WTC11 (cell line): ENCODE measurements at regions of chr15 and their contacts with region 1.

Region 1: DNA sequence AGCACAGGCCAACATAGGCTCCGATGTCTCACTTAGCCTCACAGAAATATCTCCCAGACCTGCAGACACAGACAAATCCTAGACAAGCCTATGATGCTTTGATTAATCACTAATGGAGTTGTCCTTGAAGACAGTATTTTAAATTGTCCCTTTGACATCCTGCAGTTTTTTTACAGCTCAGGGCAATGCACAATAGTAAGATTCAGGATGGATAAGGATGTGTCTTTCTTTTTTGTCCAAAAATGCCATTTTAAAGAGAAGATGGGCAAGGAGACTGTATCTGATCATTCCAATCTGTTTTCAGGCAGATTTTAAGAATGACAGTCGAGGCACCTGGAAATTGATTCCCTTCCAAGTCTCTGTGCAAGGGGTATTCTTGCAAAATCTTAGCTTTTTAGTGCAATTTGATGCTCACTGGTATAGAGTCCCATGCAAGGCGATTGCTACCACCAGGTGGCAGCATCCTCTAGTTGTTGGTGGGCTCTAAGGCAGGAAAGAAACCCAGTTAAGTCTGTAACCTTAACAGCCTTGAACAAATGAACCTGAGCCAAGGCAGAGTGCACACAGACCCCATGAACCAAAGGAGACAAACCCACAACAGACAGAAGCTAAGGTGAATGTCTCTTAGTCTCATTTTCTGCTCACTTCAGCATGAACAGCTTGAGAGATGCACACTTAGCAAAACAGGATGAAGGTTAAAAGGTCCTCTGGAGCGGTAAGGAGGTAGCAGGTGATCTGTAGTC is 51.2 kb upstream of the MINAR1 start:
- DNase-seq: peak; percentile 85
- ATAC-seq: peak; percentile 99
- H3K4me3 Mint-ChIP-seq: no peak overlapping the region
- H3K27ac Mint-ChIP-seq: no peak overlapping the region
- H3K4me1 Mint-ChIP-seq: no peaks in the 10 kb centered on the region; the same call in 1 of the 2 replicates
- H3K27me3 Mint-ChIP-seq: no peaks in the 10 kb centered on the region
- CTCF ChIP-seq: peak; percentile 85

Region 2: GRCh38 chr15:79358069-79358468 is 22.9 kb before region 1 on chr15:
- CTCF ChIA-PET with region 1: interaction called, 10 read pairs
- POLR2A ChIA-PET with region 1: no interaction called
- DNase-seq: no peak
- ATAC-seq: no peak
- H3K4me3 Mint-ChIP-seq: no peak overlapping the region
- H3K27ac Mint-ChIP-seq: no peak overlapping the region
- H3K4me1 Mint-ChIP-seq: no peaks in the 10 kb centered on the region
- H3K27me3 Mint-ChIP-seq: no peaks in the 10 kb centered on the region
- CTCF ChIP-seq: no peak

Region 3: GRCh38 chr15:79394231-79394630 is 13.3 kb after region 1 on chr15:
- CTCF ChIA-PET with region 1: interaction called, 17 read pairs
- POLR2A ChIA-PET with region 1: no interaction called
- DNase-seq: no peak
- ATAC-seq: no peak
- H3K4me3 Mint-ChIP-seq: no peak overlapping the region
- H3K27ac Mint-ChIP-seq: no peak overlapping the region
- H3K4me1 Mint-ChIP-seq: no peaks in the 10 kb centered on the region
- H3K27me3 Mint-ChIP-seq: no peaks in the 10 kb centered on the region
- CTCF ChIP-seq: no peak

Region 4: GRCh38 chr15:79450648-79451047 is 69.7 kb after region 1 on chr15:
- CTCF ChIA-PET with region 1: interaction called, 11 read pairs
- POLR2A ChIA-PET with region 1: no interaction called
- DNase-seq: no peak
- ATAC-seq: 0 out of 2 replicates have a peak, but pooled peaks have one; percentile 22
- H3K4me3 Mint-ChIP-seq: no peak overlapping the region
- H3K27ac Mint-ChIP-seq: no peak overlapping the region
- H3K4me1 Mint-ChIP-seq: no peaks in the 10 kb centered on the region
- H3K27me3 Mint-ChIP-seq: no peaks in the 10 kb centered on the region
- CTCF ChIP-seq: no peak

Region 5: DNA sequence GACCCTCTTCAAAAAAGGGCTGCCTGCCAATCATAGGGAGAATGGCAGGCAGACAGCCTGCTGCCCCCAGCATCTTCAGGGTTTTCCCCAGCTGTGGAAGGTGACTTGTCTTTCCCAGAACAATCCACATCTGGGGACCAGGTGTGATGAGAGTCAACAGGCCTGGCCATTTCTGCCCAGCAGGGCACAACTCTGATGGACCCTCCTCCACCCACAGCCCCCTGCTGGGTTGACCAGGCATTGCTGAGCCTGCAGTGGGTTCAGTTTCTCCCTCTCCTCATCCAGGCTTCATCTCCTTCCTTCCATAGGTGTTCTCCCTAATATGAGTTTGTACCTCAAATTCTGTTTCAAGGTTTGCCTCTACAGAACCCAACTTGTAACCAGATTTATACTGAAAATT is 162.2 kb after region 1 on chr15:
- CTCF ChIA-PET with region 1: no interaction called
- POLR2A ChIA-PET with region 1: no interaction called
- DNase-seq: no peak
- ATAC-seq: no peak
- H3K4me3 Mint-ChIP-seq: no peak overlapping the region
- H3K27ac Mint-ChIP-seq: no peak overlapping the region
- H3K4me1 Mint-ChIP-seq: 0 out of 2 replicates have a peak, but pooled peaks cover 4% of the 10 kb centered on the region
- H3K27me3 Mint-ChIP-seq: no peaks in the 10 kb centered on the region
- CTCF ChIP-seq: no peak